ENCODE measurements at regions of chr19 and their contacts with region 1.

Region 1: GRCh38 chr19:16801596-16801995 is 27.6 kb upstream of the SIN3B start:
- DNase-seq: peak in 1 of 2 experiments; percentile 46
- H3K4me3 ChIP-seq: no peak overlapping the region
- H3K27ac ChIP-seq: no peak overlapping the region
- H3K4me1 ChIP-seq: no peaks in the 10 kb centered on the region
- H3K27me3 ChIP-seq: no peaks in the 10 kb centered on the region
- CTCF ChIP-seq: no peak

Region 2: DNA sequence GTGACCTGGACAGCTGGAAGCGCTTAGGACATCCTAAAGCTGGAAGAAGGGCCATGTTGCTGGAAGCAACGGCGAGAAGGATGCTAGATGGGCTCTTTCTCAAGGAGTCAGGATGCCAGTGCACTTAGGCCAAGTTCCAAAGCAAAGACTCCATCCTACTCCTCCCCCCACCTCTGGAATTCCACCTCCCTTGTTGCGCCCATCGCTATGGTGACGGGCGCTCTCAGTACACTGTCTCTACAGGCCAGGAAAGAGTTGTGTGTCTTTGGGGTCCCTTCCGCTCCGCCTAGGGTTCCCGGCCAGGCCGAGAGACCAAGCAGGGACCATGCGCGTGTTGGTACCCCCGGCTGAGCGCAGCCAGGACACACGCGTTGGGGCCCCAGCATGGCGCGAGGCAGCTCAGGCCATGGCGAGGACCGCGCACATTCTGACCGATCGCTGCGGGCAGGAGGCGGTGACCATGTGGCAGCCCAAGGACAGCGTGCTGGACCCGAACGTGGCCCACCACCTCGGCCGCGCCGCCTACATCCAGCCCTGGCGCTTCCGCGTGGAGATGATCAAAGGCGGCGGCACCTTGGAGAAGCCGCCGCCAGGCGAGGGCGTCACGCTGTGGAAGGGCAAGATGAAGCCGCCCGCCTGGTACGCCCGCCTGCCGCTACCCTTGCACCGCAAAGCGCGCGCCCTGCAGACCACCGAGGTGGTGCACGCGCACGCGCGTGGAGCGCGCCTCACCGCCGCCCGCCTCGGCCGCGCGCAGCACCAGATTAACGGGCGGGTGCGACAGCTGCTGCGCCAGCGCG is 1790.9 kb before region 1 on chr19:
- CTCF ChIA-PET with region 1: interaction called, 12 read pairs
- POLR2A ChIA-PET with region 1: no interaction called
- intact Hi-C with region 1: no loop called
- DNase-seq: no peak
- H3K4me3 ChIP-seq: no peak overlapping the region
- H3K27ac ChIP-seq: no peak overlapping the region
- H3K4me1 ChIP-seq: no peaks in the 10 kb centered on the region
- H3K27me3 ChIP-seq: 0 out of 2 replicates have a peak, but pooled peaks cover 3% of the 10 kb centered on the region
- CTCF ChIP-seq: no peak

Region 3: DNA sequence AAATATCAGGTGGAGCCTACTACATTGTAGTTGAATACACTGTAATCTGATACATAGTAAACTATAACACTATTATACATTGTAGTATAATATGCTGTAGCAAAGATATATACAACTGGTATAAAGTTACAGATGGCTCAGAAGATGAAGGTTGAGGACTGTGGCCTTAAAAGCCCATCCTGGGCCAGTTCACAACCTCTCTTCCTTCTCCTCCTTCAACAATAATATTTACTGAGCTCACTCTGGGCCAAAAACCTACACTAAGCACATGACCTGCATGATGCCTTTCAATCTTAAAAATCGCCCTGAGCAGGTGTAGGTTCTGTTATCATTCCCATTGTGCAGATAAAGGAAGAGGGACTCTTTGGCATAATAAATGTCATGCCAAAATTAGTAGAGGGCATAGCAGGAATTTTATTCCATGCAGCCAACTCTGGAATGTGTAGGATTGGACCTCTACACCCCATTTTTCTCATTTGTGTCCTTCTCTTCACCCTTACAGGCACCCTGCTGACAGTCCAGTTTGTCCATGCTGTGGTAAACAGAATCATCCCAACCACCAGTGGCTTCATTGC is 13.0 kb after region 1 on chr19:
- CTCF ChIA-PET with region 1: no interaction called
- POLR2A ChIA-PET with region 1: interaction called, 12 read pairs
- intact Hi-C with region 1: no loop called
- DNase-seq: no peak
- H3K4me3 ChIP-seq: no peak overlapping the region
- H3K27ac ChIP-seq: no peak overlapping the region
- H3K4me1 ChIP-seq: peaks cover 26% of the 10 kb centered on the region
- H3K27me3 ChIP-seq: no peaks in the 10 kb centered on the region
- CTCF ChIP-seq: no peak

Region 4: GRCh38 chr19:16899566-16900075 is 98.0 kb after region 1 on chr19:
- CTCF ChIA-PET with region 1: interaction called, 10 read pairs
- POLR2A ChIA-PET with region 1: no interaction called
- intact Hi-C with region 1: no loop called
- DNase-seq: peak; percentile 45 to 48
- H3K4me3 ChIP-seq: no peak overlapping the region
- H3K27ac ChIP-seq: no peak overlapping the region
- H3K4me1 ChIP-seq: peaks cover 3% of the 10 kb centered on the region; the same call in 1 of the 2 replicates
- H3K27me3 ChIP-seq: no peaks in the 10 kb centered on the region
- CTCF ChIP-seq: peak; percentile 82

Measured in PC-9 (cell line).